ENCODE measurements at regions of chr15 and their contacts with region 1.

Region 1: DNA sequence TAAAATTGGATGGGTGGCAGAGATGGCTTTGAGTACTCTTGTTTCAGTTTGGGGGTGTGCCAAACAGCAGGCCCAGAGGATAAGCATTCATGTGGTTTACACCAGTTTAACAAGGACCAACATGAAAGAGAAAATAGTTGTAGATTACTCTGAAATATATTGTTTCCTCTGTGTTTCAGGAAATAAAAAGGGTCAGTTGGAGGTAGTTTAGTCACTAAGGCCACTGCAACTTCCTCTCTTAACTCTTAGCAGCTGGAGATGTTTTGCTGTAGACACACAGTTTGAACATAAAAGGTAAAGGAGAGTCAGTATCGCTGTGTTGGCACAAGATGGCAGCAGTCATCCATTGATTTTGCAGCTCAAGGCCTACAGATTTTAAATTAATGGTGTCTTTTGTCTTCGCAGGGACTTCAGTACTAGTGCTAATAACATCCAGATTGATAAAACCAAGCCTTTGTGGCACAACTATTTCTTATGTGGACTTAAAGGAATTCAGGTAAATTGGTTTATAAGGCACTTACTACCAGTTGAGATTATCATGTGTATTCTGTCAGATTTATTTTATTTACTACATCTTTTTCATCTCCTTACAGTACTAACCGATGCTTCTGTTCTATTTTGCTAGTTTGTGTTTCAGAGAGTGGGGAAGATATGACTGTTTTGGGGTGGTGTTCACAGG is 65.5 kb downstream of the GALK2 start:
- DNase-seq: peak; percentile 67
- H3K4me3 Mint-ChIP-seq: no peak overlapping the region
- H3K27ac Mint-ChIP-seq: peak overlapping the region; percentile 76
- H3K4me1 Mint-ChIP-seq: peaks cover 14% of the 10 kb centered on the region
- H3K27me3 Mint-ChIP-seq: no peaks in the 10 kb centered on the region

Region 2: GRCh38 chr15:49223536-49224286 is 11.9 kb before region 1 on chr15:
- CTCF ChIA-PET with region 1: no interaction called
- POLR2A ChIA-PET with region 1: no interaction called
- DNase-seq: no peak
- H3K4me3 Mint-ChIP-seq: no peak overlapping the region
- H3K27ac Mint-ChIP-seq: no peak overlapping the region
- H3K4me1 Mint-ChIP-seq: peaks cover 14% of the 10 kb centered on the region
- H3K27me3 Mint-ChIP-seq: no peaks in the 10 kb centered on the region

Region 3: GRCh38 chr15:49255966-49256759 is 20.6 kb after region 1 on chr15:
- CTCF ChIA-PET with region 1: no interaction called
- POLR2A ChIA-PET with region 1: no interaction called
- DNase-seq: no peak
- H3K4me3 Mint-ChIP-seq: no peak overlapping the region
- H3K27ac Mint-ChIP-seq: no peak overlapping the region
- H3K4me1 Mint-ChIP-seq: peaks cover 2% of the 10 kb centered on the region
- H3K27me3 Mint-ChIP-seq: no peaks in the 10 kb centered on the region

Region 4: DNA sequence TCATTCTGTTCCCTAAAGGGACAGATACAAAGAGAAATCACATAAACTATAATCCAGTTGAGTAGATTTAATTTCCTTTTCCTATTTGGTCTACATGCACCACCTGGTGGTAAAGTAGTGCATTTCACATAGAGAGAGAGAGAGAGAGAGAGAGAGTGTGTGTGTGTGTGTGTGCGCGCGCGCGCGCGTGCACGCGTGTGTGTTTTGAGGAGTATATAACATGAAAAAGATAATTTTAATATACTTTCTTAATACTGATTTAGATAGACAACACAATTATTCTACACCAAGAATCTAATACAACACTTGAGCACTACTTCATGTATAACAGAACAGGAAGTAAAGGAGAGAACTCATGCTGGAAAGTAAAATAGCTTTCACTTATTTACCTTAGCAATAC is 186.4 kb after region 1 on chr15:
- CTCF ChIA-PET with region 1: interaction called, 16 read pairs
- POLR2A ChIA-PET with region 1: no interaction called
- DNase-seq: peak; percentile 55
- H3K4me3 Mint-ChIP-seq: peak overlapping the region; percentile 4
- H3K27ac Mint-ChIP-seq: no peak overlapping the region
- H3K4me1 Mint-ChIP-seq: peaks cover 4% of the 10 kb centered on the region
- H3K27me3 Mint-ChIP-seq: peaks cover 2% of the 10 kb centered on the region